Caco-2 (cell line): ENCODE measurements at regions of chr1 and their contacts with region 1.

Region 1: DNA sequence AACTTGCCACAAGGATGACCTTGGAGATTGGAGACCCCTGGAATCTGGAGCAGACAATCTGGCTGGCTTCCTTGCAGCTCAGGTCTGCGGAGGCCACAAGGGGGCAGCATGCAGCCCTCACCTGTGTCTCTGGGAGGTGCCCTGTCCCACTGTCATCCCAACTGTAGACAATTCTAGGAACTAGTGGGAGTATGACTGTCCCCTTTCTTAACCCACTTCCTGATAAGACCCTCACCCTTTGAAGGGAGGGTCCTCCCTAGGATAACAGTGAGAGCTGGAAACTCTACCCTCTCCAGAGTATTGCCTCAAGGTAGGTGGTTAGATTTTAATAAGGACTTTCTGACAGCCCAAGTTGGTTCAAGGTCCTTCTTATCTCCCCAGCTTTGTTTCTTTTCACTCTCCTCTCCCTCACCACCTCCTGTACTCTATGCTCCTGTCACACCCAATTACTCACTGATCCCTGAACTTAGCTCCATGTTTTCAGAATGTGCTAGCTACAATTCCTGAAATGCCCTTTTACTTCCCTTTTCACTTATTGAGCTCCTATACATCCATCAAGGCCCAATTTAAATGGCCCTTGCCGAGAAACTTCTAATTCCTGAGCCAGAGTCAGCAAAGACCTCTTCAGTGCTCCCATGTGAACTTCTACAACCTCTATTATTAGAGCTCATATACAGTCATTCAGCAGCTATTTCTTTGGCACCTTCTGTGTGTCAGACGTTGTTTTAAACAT is 9.2 kb upstream of the KCNQ4 start:
- DNase-seq: peak; percentile 53 to 74
- H3K4me3 ChIP-seq: no peak overlapping the region
- H3K4me3 Mint-ChIP-seq: no peak overlapping the region
- H3K27ac Mint-ChIP-seq: no peak overlapping the region
- H3K4me1 ChIP-seq: no peaks in the 10 kb centered on the region
- H3K4me1 Mint-ChIP-seq: no peaks in the 10 kb centered on the region
- H3K27me3 ChIP-seq: no peaks in the 10 kb centered on the region
- H3K27me3 Mint-ChIP-seq: no peaks in the 10 kb centered on the region
- CTCF ChIP-seq: peak; percentile 66 to 72

Region 2: DNA sequence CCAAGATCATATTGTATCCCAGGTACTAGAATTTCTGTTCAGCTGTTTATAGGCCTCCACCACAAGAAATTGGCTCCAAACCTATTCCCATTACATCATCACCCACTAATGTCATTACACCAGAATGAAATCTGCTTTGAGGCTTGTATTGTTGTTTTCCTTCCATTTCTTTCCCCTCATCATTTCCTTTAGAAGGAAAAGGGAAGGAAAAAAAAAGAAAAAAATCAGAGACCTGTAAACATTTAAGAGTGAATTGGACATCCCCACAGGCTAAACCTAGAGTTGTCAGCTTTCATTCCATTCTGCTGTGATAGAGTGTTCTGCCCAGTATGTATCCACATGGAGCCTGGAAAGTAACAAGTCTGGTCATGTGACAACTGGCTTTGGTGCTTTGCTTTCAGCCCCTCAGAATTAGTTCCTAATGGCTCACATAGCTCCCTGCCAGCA is 38.3 kb before region 1 on chr1:
- CTCF ChIA-PET with region 1: no interaction called
- POLR2A ChIA-PET with region 1: no interaction called
- intact Hi-C with region 1: no loop called
- DNase-seq: no peak
- H3K4me3 ChIP-seq: no peak overlapping the region
- H3K4me3 Mint-ChIP-seq: no peak overlapping the region
- H3K27ac Mint-ChIP-seq: no peak overlapping the region
- H3K4me1 ChIP-seq: no peaks in the 10 kb centered on the region
- H3K4me1 Mint-ChIP-seq: no peaks in the 10 kb centered on the region
- H3K27me3 ChIP-seq: no peaks in the 10 kb centered on the region
- H3K27me3 Mint-ChIP-seq: no peaks in the 10 kb centered on the region
- CTCF ChIP-seq: no peak

Region 3: DNA sequence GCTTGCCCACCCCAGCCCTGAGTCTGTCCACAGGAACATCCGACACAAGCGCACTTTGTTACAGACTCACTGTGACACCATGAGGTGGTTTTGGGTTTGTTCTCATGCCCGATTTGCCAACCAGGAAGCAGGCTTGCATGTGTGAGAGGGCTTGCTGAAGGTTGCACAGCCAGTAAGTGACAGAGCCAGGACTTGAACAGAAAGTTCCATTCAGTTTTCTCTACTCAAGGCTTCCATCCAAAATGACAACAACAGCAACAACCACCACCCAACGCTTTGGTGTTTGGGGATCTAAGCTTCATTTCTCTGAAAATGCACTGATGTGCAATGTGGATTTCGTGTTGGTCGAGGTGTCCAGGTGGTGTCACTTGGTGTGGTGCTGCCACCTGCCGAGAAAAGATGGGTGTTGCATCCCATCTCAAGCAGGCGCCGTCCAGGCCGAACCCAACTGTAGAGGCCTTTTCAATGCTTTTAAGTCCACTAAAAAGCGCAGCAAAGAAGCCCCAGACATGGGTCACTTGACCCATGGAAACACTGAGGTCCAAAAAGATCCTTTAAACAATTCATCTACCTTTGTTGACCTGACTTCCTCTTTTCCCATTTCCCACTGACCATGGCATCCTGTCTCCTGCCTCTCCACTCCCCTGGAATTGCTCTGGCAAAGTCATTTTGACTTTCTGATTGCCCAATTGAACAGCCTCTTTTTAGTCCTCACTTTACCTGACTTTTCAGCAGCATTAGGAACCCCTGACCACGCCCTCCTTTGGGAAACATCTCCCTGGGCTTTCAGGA is 75.6 kb after region 1 on chr1:
- CTCF ChIA-PET with region 1: interaction called, 9 read pairs
- POLR2A ChIA-PET with region 1: no interaction called
- intact Hi-C with region 1: loop called (anchors 1 kb)
- DNase-seq: peak; percentile 57 to 68
- H3K4me3 ChIP-seq: no peak overlapping the region
- H3K4me3 Mint-ChIP-seq: no peak overlapping the region
- H3K27ac Mint-ChIP-seq: peak overlapping the region; percentile 32
- H3K4me1 ChIP-seq: no peaks in the 10 kb centered on the region
- H3K4me1 Mint-ChIP-seq: peaks cover 15% of the 10 kb centered on the region
- H3K27me3 ChIP-seq: no peaks in the 10 kb centered on the region
- H3K27me3 Mint-ChIP-seq: no peaks in the 10 kb centered on the region
- CTCF ChIP-seq: peak; percentile 58 to 59